ENCODE measurements at regions of chr1 and their contacts with region 1.

Region 1: GRCh38 chr1:160681067-160681890 is 30.3 kb downstream of the CD48 start:
- DNase-seq: peak; percentile 93
- ATAC-seq: peak; percentile 100
- H3K4me3 Mint-ChIP-seq: no peak overlapping the region
- H3K27ac Mint-ChIP-seq: no peak overlapping the region
- H3K4me1 Mint-ChIP-seq: peaks cover 9% of the 10 kb centered on the region
- H3K27me3 Mint-ChIP-seq: no peaks in the 10 kb centered on the region; the same call in 1 of the 2 replicates
- CTCF ChIP-seq: peak; percentile 86

Region 2: DNA sequence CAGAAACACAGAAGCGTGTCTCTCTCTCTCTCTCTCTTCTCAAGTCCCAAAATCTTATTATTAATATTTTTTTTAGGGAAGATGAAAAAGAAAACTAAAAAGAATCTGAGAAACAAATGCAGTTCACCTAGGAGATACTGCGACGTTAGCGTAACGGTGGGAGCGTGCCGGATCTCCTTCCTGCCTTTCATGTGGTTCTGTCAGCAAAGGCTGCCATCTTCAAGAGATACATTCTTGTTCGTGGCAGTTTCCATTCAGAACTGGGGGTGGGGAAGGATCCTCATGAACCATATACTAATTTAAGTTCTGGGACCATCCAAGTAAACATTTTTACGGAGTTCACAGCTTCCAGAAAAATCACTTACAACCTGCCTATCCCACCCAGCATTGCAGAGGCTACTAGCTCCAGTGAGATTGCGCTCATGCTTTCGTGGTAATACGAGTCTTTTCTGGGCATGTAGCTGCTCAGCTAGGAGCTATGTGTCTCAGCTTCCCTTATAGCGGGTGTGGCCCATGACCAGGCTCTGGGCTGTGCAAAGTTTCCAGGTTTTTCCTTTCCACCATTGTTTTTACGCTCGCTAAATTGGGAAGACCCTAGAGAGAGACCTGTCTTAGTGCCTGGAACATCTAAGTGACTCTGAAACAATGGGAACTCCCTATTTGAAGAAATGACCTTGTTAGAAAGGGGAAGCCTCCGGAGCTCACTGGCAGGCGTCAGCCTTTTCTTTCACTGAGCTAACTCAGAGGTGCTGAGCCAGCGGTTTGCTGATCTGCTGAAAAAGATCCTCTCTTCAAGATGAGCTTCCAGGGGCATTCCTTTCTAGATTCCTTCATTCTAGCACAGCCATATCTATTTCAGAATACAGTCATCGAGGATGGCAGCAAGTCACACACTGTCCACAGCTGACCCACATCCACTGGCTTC is 51.7 kb before region 1 on chr1:
- CTCF ChIA-PET with region 1: interaction called, 10 read pairs
- POLR2A ChIA-PET with region 1: no interaction called
- DNase-seq: no peak
- ATAC-seq: no peak; the same call in 1 of the 2 replicates
- H3K4me3 Mint-ChIP-seq: no peak overlapping the region
- H3K27ac Mint-ChIP-seq: no peak overlapping the region
- H3K4me1 Mint-ChIP-seq: peaks cover 7% of the 10 kb centered on the region; the same call in 1 of the 2 replicates
- H3K27me3 Mint-ChIP-seq: no peaks in the 10 kb centered on the region; the same call in 1 of the 2 replicates
- CTCF ChIP-seq: no peak

Region 3: GRCh38 chr1:160726498-160727315 is 45.4 kb after region 1 on chr1:
- CTCF ChIA-PET with region 1: interaction called, 12 read pairs
- POLR2A ChIA-PET with region 1: no interaction called
- DNase-seq: peak; percentile 69
- ATAC-seq: peak; percentile 86
- H3K4me3 Mint-ChIP-seq: no peak overlapping the region
- H3K27ac Mint-ChIP-seq: no peak overlapping the region
- H3K4me1 Mint-ChIP-seq: peaks cover 23% of the 10 kb centered on the region
- H3K27me3 Mint-ChIP-seq: no peaks in the 10 kb centered on the region; the same call in 1 of the 2 replicates
- CTCF ChIP-seq: peak; percentile 78

Region 4: GRCh38 chr1:160768295-160768657 is 87.0 kb after region 1 on chr1:
- CTCF ChIA-PET with region 1: interaction called, 22 read pairs
- POLR2A ChIA-PET with region 1: no interaction called
- DNase-seq: peak; percentile 71
- ATAC-seq: peak; percentile 89
- H3K4me3 Mint-ChIP-seq: no peak overlapping the region
- H3K27ac Mint-ChIP-seq: no peak overlapping the region
- H3K4me1 Mint-ChIP-seq: peaks cover 6% of the 10 kb centered on the region
- H3K27me3 Mint-ChIP-seq: peaks cover 3% of the 10 kb centered on the region; the same call in 1 of the 2 replicates
- CTCF ChIP-seq: peak; percentile 30; the same call in 1 of the 2 replicates

Region 5: GRCh38 chr1:160837558-160838205 is 156.4 kb after region 1 on chr1:
- CTCF ChIA-PET with region 1: interaction called, 20 read pairs
- POLR2A ChIA-PET with region 1: no interaction called
- DNase-seq: no peak
- ATAC-seq: peak; percentile 46; the same call in 1 of the 2 replicates
- H3K4me3 Mint-ChIP-seq: no peak overlapping the region
- H3K27ac Mint-ChIP-seq: no peak overlapping the region
- H3K4me1 Mint-ChIP-seq: peaks cover 21% of the 10 kb centered on the region
- H3K27me3 Mint-ChIP-seq: no peaks in the 10 kb centered on the region; the same call in 1 of the 2 replicates
- CTCF ChIP-seq: no peak